Natural killer cell (primary cell): ENCODE measurements at regions of chr4 and their contacts with region 1.

Region 1: DNA sequence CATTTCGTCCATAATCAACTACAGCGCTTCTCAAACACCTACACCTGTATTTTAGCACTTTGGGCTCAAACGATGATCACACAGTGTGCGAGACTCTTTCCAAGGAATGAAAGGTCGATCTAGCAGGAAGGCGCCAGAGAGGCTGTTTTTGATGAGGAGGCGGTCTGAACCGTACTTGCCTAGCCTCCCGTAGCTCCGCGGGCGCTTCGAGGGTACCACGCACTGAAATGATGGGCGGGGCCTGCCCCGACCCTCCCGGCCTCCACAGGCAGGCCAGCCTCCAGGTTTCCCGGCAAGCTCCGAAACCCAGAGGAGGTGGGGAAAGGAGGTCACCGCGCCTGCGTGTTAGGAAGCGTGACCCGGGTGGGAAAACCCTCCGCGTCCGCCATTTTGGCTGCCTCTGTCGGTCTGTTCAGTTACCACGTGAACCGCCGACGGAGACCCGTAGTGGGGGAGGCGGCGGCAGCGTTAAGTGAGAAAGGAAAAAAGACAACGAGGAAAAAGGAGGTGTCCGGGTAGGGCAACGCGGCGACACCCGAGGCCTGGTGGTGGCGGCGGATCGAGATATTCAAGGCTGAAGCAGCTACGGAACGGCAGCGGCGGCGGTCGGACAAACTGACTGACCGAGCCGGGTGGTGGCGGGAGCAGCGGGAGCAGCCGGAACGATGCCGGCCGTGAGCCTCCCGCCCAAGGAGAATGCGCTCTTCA is at the start of gene NAA15:
- DNase-seq: peak; percentile 93 to 99
- ATAC-seq: peak; percentile 83 to 95 (median 89)
- H3K4me3 ChIP-seq: peak within 1 kb of the TSS; percentile 90
- H3K4me3 Mint-ChIP-seq: peak within 1 kb of the TSS; percentile 97
- H3K27ac ChIP-seq: peak within 1 kb of the TSS; percentile 94
- H3K27ac Mint-ChIP-seq: peak within 1 kb of the TSS; percentile 95 to 98
- H3K4me1 ChIP-seq: peaks cover 17% of the 10 kb centered on the region
- H3K4me1 Mint-ChIP-seq: peaks cover 37 to 43% of the 10 kb centered on the region in 2 donors
- H3K27me3 ChIP-seq: no peaks in the 10 kb centered on the region
- H3K27me3 Mint-ChIP-seq: no peaks in the 10 kb centered on the region
- CTCF ChIP-seq: no peak
- total RNA-seq, gene NAA15: 56.7 to 66.3 (median 61.9) TPM

Region 2: DNA sequence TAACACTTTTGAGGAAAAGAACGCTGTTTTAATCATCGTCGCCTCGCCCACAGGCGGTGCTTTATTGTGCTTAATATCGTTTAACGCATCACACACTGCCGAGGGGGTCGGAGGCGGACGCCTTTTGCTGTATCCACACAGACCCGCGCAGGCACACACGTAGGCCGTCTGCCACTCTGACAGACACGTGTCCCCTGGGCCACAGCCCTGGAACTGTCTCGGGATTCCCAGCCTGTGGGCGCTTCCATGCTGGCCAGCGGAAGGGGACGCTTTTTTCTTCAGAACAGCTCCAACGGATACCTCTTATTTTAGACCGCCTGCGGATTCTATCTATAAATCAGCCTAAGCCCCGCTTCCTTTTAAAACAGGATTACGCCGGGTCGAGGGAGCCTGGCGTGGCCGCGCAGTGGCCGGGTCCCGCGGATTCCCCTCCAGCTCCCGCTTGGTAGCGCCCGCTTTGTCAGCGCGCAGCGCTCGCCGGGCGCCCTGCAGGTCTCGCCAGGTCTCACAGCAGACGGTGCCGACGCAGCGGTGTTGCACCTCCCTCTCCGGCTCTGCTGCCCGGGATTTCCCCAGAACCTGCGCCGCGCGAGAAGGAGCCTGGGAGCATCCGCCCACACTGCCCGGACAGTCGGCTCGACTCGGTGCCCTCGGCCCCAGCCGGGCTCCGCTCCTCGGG is 285.9 kb before region 1 on chr4 and contains the start of gene NOCT:
- intact Hi-C with region 1: loop called (anchors 1 kb)
- DNase-seq: peak; percentile 90 to 97
- ATAC-seq: peak; percentile 86 to 95 (median 87)
- H3K4me3 ChIP-seq: peak within 1 kb of the TSS; percentile 50
- H3K4me3 Mint-ChIP-seq: peak within 1 kb of the TSS; percentile 94
- H3K27ac ChIP-seq: peak within 1 kb of the TSS; percentile 77
- H3K27ac Mint-ChIP-seq: peak within 1 kb of the TSS; percentile 88 to 98
- H3K4me1 ChIP-seq: peaks cover 15% of the 10 kb centered on the region
- H3K4me1 Mint-ChIP-seq: peaks cover 10 to 11% of the 10 kb centered on the region in 2 donors
- H3K27me3 ChIP-seq: no peaks in the 10 kb centered on the region
- H3K27me3 Mint-ChIP-seq: peaks cover 0 to 4% of the 10 kb centered on the region in 2 donors
- CTCF ChIP-seq: no peak
- total RNA-seq, gene NOCT: 17.6 to 28.5 (median 20.9) TPM

Region 3: GRCh38 chr4:139083956-139084803 is 217.1 kb before region 1 on chr4:
- intact Hi-C with region 1: loop called (anchors 2 kb)
- DNase-seq: peak; percentile 73 to 91
- ATAC-seq: peak; percentile 42 to 63 (median 52)
- H3K4me3 ChIP-seq: peak overlapping the region; percentile 89
- H3K4me3 Mint-ChIP-seq: peak overlapping the region; percentile 93
- H3K27ac ChIP-seq: peak overlapping the region; percentile 93
- H3K27ac Mint-ChIP-seq: peak overlapping the region; percentile 94 to 97
- H3K4me1 ChIP-seq: peaks cover 5% of the 10 kb centered on the region
- H3K4me1 Mint-ChIP-seq: peaks cover 44 to 49% of the 10 kb centered on the region in 2 donors
- H3K27me3 ChIP-seq: no peaks in the 10 kb centered on the region
- H3K27me3 Mint-ChIP-seq: no peaks in the 10 kb centered on the region
- CTCF ChIP-seq: no peak

Region 4: DNA sequence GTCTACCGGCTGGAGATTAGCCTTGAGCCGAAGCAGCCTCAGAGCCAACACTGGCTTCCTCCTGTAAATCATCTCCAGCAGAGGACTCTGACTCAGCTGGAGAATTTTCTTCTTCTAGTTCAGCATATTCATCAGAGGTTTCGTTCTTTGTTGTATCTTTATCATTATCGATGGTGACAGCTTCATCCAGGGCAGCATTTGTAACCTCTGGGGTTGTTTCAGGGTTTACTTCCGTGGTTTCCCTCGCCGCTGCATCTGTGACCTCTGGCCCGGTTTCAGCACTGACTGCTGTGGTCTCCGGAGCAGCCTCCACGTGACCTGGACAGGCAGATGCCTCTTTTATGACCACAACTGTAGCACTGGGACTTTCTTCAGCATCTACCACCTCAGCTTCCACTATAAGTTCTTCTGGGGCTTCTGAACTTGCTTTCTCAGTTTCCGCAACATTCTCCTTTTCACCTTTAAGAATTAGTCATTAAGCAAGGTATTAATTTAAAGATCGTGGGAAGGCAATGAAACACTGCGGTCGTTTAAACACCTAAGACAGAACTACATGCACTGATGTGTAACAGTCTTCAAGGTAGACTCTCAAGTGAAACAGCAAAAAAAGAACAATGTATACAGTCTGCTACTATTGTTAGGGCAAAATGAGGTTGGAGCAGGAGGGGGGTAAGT is 34.5 kb before region 1 on chr4:
- intact Hi-C with region 1: loop called (anchors 2 kb)
- DNase-seq: peak; percentile 66 to 85
- ATAC-seq: peak; percentile 93 to 99 (median 95)
- H3K4me3 ChIP-seq: peak overlapping the region; percentile 39
- H3K4me3 Mint-ChIP-seq: peak overlapping the region; percentile 91
- H3K27ac ChIP-seq: peak overlapping the region; percentile 87
- H3K27ac Mint-ChIP-seq: peak overlapping the region; percentile 92 to 95
- H3K4me1 ChIP-seq: peaks cover 7% of the 10 kb centered on the region
- H3K4me1 Mint-ChIP-seq: peaks cover 18 to 22% of the 10 kb centered on the region in 2 donors
- H3K27me3 ChIP-seq: no peaks in the 10 kb centered on the region
- H3K27me3 Mint-ChIP-seq: no peaks in the 10 kb centered on the region
- CTCF ChIP-seq: no peak

Region 5: DNA sequence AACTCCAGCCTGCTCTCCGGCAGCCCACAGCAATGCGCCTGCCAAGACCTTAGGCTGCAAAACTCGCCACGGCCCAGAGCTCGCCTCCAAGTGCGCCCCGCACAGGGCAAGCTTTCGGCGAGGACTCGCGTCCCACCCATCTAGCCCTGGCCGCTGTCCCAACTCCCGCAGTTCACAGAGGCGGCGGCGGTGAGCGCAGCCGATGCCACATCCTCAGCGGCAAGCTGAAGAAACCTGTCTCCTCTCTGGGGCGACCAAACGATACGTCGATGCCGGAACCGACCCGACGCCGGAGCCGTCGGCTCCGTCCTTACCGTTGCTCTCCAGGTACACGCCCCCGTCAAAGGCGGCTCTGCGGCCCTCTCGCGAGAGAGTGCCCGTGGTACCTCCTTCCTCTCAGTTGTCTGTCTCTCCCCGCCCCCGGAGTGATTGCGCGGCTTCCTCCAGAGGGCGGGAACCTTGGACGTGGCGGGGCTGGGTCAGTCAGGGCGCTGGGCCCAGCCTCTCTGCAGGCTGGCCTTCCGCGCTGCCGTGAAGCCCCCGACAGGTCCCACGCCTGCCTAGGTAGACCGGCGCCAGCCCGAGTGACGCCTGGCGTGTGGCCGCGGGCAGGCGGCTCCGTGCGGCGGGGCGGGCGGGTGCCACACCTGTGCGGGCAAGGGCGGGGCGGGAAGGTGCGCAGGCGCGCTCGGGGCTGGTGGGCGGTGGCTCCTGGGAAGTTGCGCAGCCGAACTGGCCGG is 152.3 kb after region 1 on chr4:
- intact Hi-C with region 1: loop called (anchors 2 kb)
- DNase-seq: peak; percentile 91 to 97
- ATAC-seq: peak; percentile 89 to 96 (median 91)
- H3K4me3 ChIP-seq: peak overlapping the region; percentile 80
- H3K4me3 Mint-ChIP-seq: peak overlapping the region; percentile 99
- H3K27ac ChIP-seq: peak overlapping the region; percentile 89
- H3K27ac Mint-ChIP-seq: peak overlapping the region; percentile 99
- H3K4me1 ChIP-seq: peaks cover 20% of the 10 kb centered on the region
- H3K4me1 Mint-ChIP-seq: peaks cover 62% of the 10 kb centered on the region in 2 donors
- H3K27me3 ChIP-seq: no peaks in the 10 kb centered on the region
- H3K27me3 Mint-ChIP-seq: no peaks in the 10 kb centered on the region
- CTCF ChIP-seq: no peak

Region 6: DNA sequence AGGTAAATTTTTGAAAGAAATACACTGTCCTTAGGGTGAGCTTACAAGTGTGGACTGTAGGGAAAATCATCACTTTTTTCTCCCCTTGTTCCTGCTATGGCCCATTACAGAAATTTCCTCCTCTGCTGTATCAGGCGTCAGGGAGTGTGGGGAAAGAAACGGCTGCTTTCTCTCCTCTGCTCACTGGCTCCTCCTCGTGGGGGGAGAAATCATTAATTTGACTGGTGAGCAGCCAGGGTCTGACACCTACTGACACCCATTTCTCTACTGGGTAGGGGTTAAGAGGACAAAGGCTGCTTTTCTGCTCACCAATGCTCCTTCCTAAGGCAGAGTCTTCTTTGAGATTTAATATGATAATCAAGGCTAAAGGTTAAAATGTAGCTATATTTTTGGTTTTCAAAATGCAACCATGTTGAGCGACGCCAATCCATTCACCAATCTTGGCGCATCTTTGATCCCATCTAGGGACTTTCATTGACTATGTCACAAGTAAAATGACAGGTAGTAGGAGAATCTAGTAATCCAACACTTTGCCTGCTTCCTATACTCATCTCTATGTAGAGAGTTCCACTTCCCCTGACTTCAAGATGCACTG is 229.7 kb after region 1 on chr4:
- intact Hi-C with region 1: no loop called
- DNase-seq: peak; percentile 46 to 77
- ATAC-seq: peak; percentile 53 to 66 (median 63)
- H3K4me3 ChIP-seq: no peak overlapping the region
- H3K4me3 Mint-ChIP-seq: no peak overlapping the region
- H3K27ac ChIP-seq: no peak overlapping the region
- H3K27ac Mint-ChIP-seq: no peak overlapping the region
- H3K4me1 ChIP-seq: peaks cover 13% of the 10 kb centered on the region
- H3K4me1 Mint-ChIP-seq: peaks cover 23 to 42% of the 10 kb centered on the region in 2 donors
- H3K27me3 ChIP-seq: no peaks in the 10 kb centered on the region
- H3K27me3 Mint-ChIP-seq: peaks cover 0 to 3% of the 10 kb centered on the region in 2 donors
- CTCF ChIP-seq: peak; percentile 82

Region 7: DNA sequence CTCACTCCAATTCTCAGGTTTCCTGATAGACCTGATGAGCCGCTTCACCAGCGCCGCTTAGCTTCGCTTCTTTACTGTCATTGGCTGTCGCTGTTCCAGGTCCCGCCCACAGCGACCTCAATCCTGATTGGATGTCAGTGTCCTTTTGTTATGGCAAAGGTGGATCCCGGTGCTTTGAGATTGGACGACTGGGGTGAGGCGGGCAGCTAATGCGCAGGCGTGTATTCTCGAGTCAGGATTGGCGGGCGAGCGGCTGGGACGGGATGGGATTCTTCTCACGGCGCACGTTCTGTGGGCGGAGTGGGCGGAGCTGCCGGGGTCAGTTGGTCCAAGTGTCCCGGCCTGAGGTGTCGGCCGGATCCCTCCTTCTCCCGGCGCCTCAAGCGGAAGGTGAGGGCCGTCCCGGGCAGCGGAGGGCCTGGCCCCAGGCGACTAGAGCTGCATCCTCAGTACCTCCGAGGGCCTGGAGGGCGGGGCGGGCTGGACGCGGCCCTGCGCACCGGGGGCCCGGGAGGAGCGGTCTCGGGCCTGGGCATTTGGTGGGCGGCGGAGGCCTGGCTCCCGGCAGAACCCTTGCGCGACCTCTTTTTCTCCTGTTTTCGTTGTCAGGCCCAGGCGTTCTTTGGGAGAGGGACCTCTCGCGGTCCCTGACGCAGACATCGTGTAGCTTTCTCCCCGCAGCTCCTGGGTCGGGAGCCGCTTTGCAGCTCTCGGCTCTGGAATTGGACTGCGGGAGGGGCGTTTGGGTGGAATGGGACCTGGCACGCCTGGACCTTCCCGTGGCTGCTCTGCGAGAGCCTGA is 1072.3 kb after region 1 on chr4 and contains the start of gene SCOC:
- intact Hi-C with region 1: loop called (anchors 5 kb)
- DNase-seq: peak; percentile 92 to 98
- ATAC-seq: peak; percentile 93 to 98 (median 94)
- H3K4me3 ChIP-seq: peak within 1 kb of the TSS; percentile 76
- H3K4me3 Mint-ChIP-seq: peak within 1 kb of the TSS; percentile 83
- H3K27ac ChIP-seq: peak within 1 kb of the TSS; percentile 75
- H3K27ac Mint-ChIP-seq: no peak within 1 kb of the TSS
- H3K4me1 ChIP-seq: peaks cover 7% of the 10 kb centered on the region
- H3K4me1 Mint-ChIP-seq: peaks cover 29 to 36% of the 10 kb centered on the region in 2 donors
- H3K27me3 ChIP-seq: no peaks in the 10 kb centered on the region
- H3K27me3 Mint-ChIP-seq: no peaks in the 10 kb centered on the region
- CTCF ChIP-seq: peak; percentile 3
- total RNA-seq, gene SCOC: 8.6 to 10.3 (median 9.4) TPM